HEK293 (cell line): ENCODE measurements at regions of chr12 and their contacts with region 1.

Region 1: GRCh38 chr12:49130151-49131050 is 794 bp downstream of the TUBA1B start:
- H3K4me3 ChIP-seq: peak overlapping the region; percentile 95
- H3K27ac ChIP-seq: peak overlapping the region; percentile 99
- H3K4me1 ChIP-seq: peaks cover 11% of the 10 kb centered on the region
- CTCF ChIP-seq: peak; percentile 99

Region 2: DNA sequence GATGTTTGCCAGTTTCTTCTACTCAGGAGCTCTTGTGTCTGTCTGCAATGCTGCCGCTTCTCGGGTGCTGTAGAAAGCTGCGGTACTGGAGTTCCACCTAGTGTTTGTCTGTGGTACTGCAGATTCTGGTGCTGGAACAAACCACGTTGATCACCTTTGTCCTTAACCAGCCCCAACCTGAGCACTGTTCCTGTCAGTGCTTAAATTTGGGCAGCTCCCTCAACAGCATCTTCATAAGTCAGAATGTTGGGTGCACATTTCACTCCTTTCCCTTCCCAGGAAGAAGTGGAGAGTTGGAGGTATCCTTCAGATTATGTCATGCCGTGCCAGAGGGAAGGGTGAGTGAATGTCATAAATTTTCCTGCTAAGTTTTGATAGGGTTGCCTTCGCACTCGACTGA is 511.9 kb before region 1 on chr12:
- CTCF ChIA-PET with region 1: no interaction called
- POLR2A ChIA-PET with region 1: no interaction called
- H3K4me3 ChIP-seq: no peak overlapping the region
- H3K27ac ChIP-seq: no peak overlapping the region
- H3K4me1 ChIP-seq: no peaks in the 10 kb centered on the region
- CTCF ChIP-seq: peak; percentile 87

Region 3: DNA sequence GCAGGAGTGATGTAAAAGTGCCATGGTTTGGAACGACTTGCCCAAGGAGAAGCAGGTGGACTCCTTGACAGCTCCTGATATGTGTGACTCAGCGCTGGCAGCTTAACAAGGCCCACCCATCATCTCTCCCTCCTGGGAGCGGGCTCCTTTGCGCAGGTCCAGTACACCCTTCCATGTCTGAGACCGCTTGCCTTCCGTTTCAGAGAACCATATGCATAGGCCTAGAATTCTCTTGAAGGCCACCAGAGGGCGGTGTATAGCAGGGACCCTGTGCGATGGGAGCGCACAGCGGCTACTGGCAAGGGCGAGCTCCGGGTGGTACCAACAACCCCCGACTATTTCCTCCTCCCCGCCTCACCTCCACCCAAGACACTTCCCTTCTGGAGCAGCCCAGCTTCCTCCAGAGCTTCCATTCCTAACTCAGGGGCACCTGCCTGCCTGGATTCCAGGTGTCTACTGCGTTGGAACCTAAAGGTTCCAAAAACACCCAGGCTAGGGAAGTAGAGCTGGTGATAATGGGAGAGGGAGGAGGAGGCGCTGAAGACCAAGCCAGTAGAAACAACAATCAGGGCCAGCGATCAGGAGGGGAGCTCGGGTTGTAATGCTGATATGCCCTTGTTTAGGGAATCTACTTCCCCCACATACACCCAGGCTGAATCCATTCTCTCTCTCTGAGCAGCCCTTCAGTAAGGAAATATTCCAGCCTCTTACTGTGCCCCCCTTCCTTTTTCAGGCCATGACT is 42.0 kb before region 1 on chr12:
- CTCF ChIA-PET with region 1: interaction called, 50 read pairs
- POLR2A ChIA-PET with region 1: interaction called, 31 read pairs
- H3K4me3 ChIP-seq: peak overlapping the region; percentile 25
- H3K27ac ChIP-seq: no peak overlapping the region
- H3K4me1 ChIP-seq: no peaks in the 10 kb centered on the region
- CTCF ChIP-seq: peak; percentile 97

Region 4: DNA sequence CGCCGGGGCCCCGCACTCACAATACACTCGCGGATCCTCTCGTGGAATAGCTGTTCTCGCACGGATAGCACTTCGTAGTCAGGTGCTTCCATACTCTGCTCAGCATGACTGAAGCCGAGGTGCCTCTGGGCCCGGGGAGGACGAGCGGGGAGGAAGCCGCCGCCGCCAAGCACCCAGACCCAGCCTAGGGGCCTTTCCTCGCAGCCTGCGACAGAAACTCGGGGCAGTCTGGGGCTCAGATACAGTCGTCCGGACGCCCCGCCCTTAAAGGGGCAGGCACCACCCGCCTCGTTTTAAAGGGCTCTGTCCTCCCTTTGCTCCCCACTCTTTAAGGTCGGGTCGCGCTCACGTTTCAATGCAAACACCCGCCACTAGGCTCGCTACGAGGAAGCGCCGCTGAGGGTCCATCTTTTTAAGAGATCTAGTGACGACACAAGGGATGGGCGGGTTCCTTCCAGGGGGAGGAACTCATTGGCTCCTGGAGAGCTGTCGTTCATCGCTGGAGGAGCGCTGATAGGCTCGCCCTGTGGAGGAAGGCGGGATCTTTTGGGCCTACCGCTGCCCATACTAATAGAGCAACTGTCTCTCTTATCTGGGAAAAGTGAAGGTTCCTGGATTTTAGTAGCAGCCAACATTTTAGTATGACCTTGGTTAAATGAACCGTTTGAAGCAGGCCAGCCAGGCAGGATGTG is 19.8 kb before region 1 on chr12 and contains the start of gene LMBR1L:
- CTCF ChIA-PET with region 1: interaction called, 19 read pairs
- POLR2A ChIA-PET with region 1: interaction called, 75 read pairs
- H3K4me3 ChIP-seq: peak within 1 kb of the TSS; percentile 98
- H3K27ac ChIP-seq: peak within 1 kb of the TSS; percentile 84
- H3K4me1 ChIP-seq: peaks cover 10% of the 10 kb centered on the region
- CTCF ChIP-seq: peak; percentile 65; the same call in 1 of the 2 replicates

Region 5: DNA sequence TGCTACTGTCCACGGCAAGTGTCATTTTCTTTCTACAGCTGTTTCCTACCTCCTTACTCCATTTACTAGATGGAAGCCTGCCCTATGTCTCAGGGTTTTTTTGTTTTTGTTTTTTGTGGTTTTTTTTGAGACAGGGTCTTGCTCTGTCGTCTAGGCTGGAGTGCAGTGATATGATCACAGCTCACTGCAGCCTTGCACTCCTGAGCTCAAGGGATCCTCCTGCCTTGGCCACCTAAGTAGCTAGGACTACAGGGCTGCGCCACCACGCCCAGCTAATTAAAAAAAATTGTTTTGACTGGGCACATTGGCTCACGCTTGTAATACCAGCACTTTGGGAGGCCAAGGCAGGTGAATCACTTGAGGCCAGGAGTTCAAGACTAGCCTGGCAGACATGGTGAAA is 43.8 kb after region 1 on chr12:
- CTCF ChIA-PET with region 1: no interaction called
- POLR2A ChIA-PET with region 1: interaction called, 13 read pairs
- H3K4me3 ChIP-seq: no peak overlapping the region
- H3K27ac ChIP-seq: no peak overlapping the region
- H3K4me1 ChIP-seq: no peaks in the 10 kb centered on the region
- CTCF ChIP-seq: no peak

Region 6: DNA sequence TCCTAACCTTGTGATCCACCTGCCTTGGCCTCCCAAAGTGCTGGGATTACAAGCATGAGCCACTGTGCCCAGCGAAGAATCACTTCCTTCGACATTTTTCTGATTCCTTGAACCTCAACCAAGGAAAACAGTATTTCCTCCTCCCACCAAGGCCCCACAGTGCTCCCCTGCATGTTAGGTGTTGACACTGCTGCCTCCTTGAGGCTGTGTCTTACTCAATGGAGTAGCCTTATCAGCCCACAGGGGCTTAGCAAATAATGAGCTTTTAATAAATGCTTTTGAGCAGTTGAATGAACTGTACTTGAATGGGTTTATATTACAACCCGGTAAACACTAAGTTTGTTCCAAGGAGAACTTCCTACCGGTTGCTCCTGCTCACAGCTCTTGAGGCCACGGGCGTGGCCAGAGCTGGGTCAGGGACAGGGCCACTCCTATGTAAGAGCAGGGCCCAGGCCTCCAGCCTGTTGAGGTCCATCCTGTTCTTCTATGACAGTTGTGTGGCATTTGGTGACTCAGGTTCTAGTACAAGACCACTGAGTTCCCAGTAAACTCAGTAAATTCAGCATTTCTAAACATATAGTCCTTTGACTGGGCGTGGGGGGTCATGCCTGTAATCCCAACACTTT is 95.3 kb after region 1 on chr12:
- CTCF ChIA-PET with region 1: interaction called, 13 read pairs
- POLR2A ChIA-PET with region 1: interaction called, 27 read pairs
- H3K4me3 ChIP-seq: no peak overlapping the region
- H3K27ac ChIP-seq: no peak overlapping the region
- H3K4me1 ChIP-seq: no peaks in the 10 kb centered on the region
- CTCF ChIP-seq: no peak

Region 7: DNA sequence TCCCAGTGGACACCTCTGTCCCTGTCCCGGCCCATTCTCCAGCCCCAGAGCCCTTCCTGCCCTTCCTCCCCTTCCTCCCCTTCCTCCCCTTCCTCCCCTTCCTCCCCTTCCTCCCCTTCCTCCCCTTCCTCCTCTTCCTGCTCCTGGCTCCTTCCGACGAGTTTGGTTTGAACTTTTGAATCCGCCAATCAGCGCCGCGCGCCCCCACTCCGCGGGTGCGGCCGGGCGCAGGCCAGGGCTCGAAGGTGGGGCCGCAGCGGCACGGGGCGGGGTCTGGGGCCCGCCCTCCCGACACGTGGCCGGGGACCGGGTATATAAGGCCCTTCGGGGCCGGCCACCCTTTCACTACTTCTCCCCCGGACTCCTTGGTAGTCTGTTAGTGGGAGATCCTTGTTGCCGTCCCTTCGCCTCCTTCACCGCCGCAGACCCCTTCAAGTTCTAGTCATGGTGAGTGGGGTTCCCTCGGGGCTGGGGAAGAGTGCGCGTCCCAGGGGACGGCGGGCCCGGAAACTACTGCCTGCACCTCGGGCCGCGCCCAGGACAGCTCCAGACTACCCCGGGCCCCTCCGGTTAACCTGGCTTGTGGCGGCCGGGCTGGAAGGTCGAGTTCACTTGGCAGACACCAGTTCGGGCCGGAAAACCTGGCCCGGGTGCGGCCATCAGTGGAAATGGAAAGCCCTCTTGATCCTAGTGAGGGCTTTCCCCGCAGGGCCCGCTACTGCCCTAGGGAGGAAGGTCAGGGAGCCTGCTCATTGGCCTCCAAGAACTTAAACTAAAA is 134.5 kb after region 1 on chr12 and contains the start of gene TUBA1C:
- CTCF ChIA-PET with region 1: interaction called, 3 read pairs
- POLR2A ChIA-PET with region 1: interaction called, 16 read pairs
- H3K4me3 ChIP-seq: peak within 1 kb of the TSS; percentile 94
- H3K27ac ChIP-seq: peak within 1 kb of the TSS; percentile 84
- H3K4me1 ChIP-seq: peaks cover 5% of the 10 kb centered on the region
- CTCF ChIP-seq: 0 out of 2 replicates have a peak, but pooled peaks have one; percentile 17